ENCODE measurements at regions of chr11 and their contacts with region 1.

Region 1: GRCh38 chr11:47152953-47153950 is 23.4 kb downstream of the ARFGAP2 start:
- DNase-seq: peak in 26 of 35 experiments; percentile 15 to 72 (median 40)
- ATAC-seq: peak; percentile 43 to 64 (median 52)
- H3K4me3 ChIP-seq: peak overlapping the region in 1 of 2 donors; percentile 5
- H3K4me3 Mint-ChIP-seq: peak overlapping the region in 2 of 3 donors; percentile 34 to 80
- H3K27ac ChIP-seq: peak overlapping the region; percentile 2
- H3K27ac Mint-ChIP-seq: peak overlapping the region; percentile 89 to 94
- H3K4me1 ChIP-seq: peaks cover 23 to 41% of the 10 kb centered on the region in 2 experiments
- H3K4me1 Mint-ChIP-seq: peaks cover 30 to 34% (median 31%) of the 10 kb centered on the region in 3 donors
- H3K27me3 ChIP-seq: no peaks in the 10 kb centered on the region
- H3K27me3 Mint-ChIP-seq: no peaks in the 10 kb centered on the region

Region 2: DNA sequence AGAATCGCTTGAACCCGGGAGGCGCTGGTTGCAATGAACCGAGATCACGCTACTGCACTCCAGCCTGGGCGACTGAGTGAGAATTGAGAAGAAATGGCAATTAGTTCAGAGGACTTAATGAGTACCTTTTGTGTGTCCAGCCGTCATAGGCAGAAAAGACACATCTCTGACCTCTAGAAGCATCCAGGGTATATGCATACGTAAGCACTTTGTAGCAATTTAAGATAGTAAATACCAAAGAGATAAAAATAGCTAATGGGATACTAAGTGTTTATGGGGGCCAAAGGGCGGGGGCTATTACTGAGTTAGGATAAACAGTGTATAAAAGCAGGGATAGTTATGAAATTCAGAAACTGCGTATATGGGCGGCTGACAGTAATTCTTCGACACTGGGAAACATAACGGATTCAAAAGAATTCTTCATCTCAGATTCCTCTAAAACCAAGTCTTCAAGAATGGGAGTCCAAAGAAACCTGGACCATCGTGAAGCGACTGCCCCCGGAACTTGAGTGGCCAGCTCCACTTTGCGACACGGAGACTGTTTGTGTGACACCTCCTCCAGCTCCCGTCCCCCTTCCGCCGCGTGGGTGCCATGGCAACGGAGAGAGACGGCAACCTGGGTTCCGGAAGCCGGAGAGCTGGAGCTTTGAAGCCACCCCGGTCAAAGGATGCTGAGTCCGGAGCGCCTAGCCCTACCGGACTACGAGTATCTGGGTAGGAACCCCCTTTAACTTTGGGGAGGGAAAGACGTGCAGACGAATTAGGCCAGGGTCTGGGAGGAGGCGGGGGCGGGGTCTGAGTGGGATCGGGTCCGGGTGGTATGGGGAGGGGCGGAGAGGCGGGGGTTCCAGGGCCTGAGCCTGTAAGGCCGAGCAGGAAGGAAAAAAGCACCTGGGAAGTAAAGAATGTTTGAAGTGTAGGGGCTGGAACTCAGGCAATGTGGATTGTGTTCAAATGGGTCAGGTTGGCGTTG is 216.8 kb before region 1 on chr11 and contains the start of gene CSTPP1:
- CTCF ChIA-PET with region 1: interaction called in 1 of 2 experiments, 10 read pairs
- POLR2A ChIA-PET with region 1: no interaction called
- DNase-seq: peak; percentile 82 to 96 (median 90)
- ATAC-seq: peak; percentile 93 to 98 (median 96)
- H3K4me3 ChIP-seq: peak within 1 kb of the TSS; percentile 51 to 52
- H3K4me3 Mint-ChIP-seq: peak within 1 kb of the TSS; percentile 82 to 94 (median 94)
- H3K27ac ChIP-seq: peak within 1 kb of the TSS; percentile 33
- H3K27ac Mint-ChIP-seq: peak within 1 kb of the TSS; percentile 91 to 92
- H3K4me1 ChIP-seq: peaks cover 8 to 16% of the 10 kb centered on the region in 2 experiments
- H3K4me1 Mint-ChIP-seq: peaks cover 18 to 21% (median 18%) of the 10 kb centered on the region in 3 donors
- H3K27me3 ChIP-seq: peaks cover 0 to 10% of the 10 kb centered on the region in 2 experiments
- H3K27me3 Mint-ChIP-seq: peaks cover 5 to 9% of the 10 kb centered on the region in 2 donors
- total RNA-seq, gene CSTPP1: 13.3 to 16.9 (median 15.0) TPM

Region 3: DNA sequence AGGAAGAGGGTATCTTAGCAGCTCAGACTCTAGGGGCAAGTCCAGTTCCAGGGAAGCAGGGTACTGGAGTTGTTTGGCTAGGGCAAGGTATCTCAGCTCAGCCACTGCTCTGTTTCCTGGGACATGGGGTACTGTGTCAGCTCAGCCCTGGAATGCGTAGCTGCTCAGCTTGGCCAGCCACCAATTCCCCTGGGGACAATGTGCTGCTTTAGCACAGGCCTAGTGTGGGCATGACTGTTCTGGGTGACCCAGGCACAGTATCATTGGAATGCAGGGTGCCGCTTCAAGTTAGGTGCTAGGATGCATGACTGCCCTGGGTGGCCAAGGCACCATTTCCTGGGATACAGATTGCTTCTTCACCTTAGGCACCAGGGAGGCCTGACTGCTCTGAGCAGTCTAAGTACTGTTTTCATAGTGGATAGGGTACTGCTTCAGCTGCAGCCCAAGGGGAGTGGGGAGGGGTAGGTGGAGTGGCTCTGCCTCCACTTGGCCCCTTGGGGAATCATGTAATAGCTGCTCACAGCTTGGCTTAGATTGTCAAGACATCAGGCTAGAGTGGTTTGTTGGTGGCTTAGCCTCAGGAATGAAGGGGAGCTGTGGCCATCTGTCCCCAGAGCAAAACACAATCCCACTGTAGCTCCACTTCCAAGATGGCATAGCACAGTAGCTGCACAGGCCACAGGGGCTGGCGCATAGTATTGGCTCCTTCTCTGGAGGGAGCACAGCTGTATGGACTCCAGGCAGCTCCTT is 152.7 kb after region 1 on chr11:
- CTCF ChIA-PET with region 1: no interaction called
- POLR2A ChIA-PET with region 1: interaction called in 1 of 2 experiments, 10 read pairs
- DNase-seq: no peak
- ATAC-seq: no peak
- H3K4me3 ChIP-seq: no peak overlapping the region
- H3K4me3 Mint-ChIP-seq: no peak overlapping the region
- H3K27ac ChIP-seq: no peak overlapping the region
- H3K27ac Mint-ChIP-seq: no peak overlapping the region
- H3K4me1 ChIP-seq: no peaks in the 10 kb centered on the region
- H3K4me1 Mint-ChIP-seq: peaks cover 0 to 6% (median 5%) of the 10 kb centered on the region in 3 donors
- H3K27me3 ChIP-seq: no peaks in the 10 kb centered on the region
- H3K27me3 Mint-ChIP-seq: no peaks in the 10 kb centered on the region